HepG2 (cell line): ENCODE measurements at regions of chr19 and their contacts with region 1.

Region 1: DNA sequence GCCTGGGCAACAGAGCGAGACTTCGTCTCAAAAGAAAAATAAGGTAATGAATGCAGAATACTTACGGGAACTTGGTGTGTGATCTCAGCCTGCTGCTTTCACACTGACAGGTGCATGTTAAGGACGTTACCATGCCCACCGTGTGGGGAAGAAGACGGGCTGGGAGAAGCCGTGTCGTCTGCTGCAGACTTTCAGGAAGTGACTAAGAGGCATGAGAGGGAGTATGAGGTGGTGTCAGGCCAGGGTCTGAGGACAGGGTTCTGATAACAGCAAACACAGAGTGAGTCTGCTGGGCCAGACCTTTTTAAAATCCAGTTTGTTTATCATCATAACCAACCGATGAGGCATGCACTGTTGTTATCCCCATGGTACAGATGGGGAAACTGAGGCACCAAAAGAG is 13.6 kb upstream of the GALP start:
- DNase-seq: no peak
- ATAC-seq: peak; percentile 9; the same call in 2 of the 3 replicates
- H3K4me3 ChIP-seq: no peak overlapping the region
- H3K27ac ChIP-seq: no peak overlapping the region
- H3K4me1 ChIP-seq: peaks cover 7% of the 10 kb centered on the region
- H3K27me3 ChIP-seq: no peaks in the 10 kb centered on the region
- CTCF ChIP-seq: no peak
- EP300 ChIP-seq: no peak
- POLR2A ChIP-seq: no peak
- RAD21 ChIP-seq: no peak

Region 2: GRCh38 chr19:55993492-55993891 is 168.8 kb before region 1 on chr19:
- CTCF ChIA-PET with region 1: no interaction called
- POLR2A ChIA-PET with region 1: no interaction called
- in situ Hi-C with region 1: no loop called
- intact Hi-C with region 1: no loop called
- DNase-seq: no peak
- ATAC-seq: no peak
- H3K4me3 ChIP-seq: no peak overlapping the region
- H3K27ac ChIP-seq: no peak overlapping the region
- H3K4me1 ChIP-seq: no peaks in the 10 kb centered on the region
- H3K27me3 ChIP-seq: peaks cover 0 to 3% of the 10 kb centered on the region in 2 experiments; a peak in 1 of 5 replicates
- CTCF ChIP-seq: no peak
- EP300 ChIP-seq: no peak
- POLR2A ChIP-seq: no peak
- RAD21 ChIP-seq: no peak

Region 3: GRCh38 chr19:56097306-56097705 is 65.0 kb before region 1 on chr19:
- CTCF ChIA-PET with region 1: no interaction called
- POLR2A ChIA-PET with region 1: no interaction called
- in situ Hi-C with region 1: loop called (anchors 5 kb)
- intact Hi-C with region 1: no loop called
- DNase-seq: no peak
- ATAC-seq: no peak
- H3K4me3 ChIP-seq: no peak overlapping the region
- H3K27ac ChIP-seq: no peak overlapping the region
- H3K4me1 ChIP-seq: no peaks in the 10 kb centered on the region
- H3K27me3 ChIP-seq: no peaks in the 10 kb centered on the region; a peak in 1 of 5 replicates
- CTCF ChIP-seq: no peak
- EP300 ChIP-seq: no peak
- POLR2A ChIP-seq: no peak
- RAD21 ChIP-seq: no peak

Region 4: DNA sequence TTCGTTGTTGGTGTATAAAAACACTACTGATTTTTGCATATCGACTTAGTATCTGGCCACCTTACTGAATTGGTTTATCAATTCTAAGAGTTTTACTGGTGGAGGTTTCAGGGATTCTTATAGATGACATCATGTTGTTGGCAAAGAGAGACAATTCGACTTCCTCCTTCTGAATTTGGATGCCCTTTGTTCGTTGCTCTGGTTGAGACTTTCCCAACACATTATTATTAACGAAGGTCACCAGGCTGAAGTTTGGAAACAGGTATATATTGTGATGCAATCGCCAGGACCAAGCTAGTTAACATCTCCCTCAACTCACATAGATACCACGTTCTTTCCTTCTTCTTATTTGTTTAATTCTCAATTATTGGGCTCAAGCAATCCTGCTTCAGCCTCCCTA is 37.4 kb after region 1 on chr19:
- CTCF ChIA-PET with region 1: no interaction called
- POLR2A ChIA-PET with region 1: no interaction called
- in situ Hi-C with region 1: no loop called
- intact Hi-C with region 1: no loop called
- DNase-seq: peak; percentile 17
- ATAC-seq: no peak
- H3K4me3 ChIP-seq: no peak overlapping the region
- H3K27ac ChIP-seq: no peak overlapping the region
- H3K4me1 ChIP-seq: no peaks in the 10 kb centered on the region
- H3K27me3 ChIP-seq: no peaks in the 10 kb centered on the region; a peak in 1 of 5 replicates
- CTCF ChIP-seq: no peak
- EP300 ChIP-seq: no peak
- POLR2A ChIP-seq: no peak
- RAD21 ChIP-seq: no peak